ENCODE measurements at regions of chr12 and their contacts with region 1.

Region 1: DNA sequence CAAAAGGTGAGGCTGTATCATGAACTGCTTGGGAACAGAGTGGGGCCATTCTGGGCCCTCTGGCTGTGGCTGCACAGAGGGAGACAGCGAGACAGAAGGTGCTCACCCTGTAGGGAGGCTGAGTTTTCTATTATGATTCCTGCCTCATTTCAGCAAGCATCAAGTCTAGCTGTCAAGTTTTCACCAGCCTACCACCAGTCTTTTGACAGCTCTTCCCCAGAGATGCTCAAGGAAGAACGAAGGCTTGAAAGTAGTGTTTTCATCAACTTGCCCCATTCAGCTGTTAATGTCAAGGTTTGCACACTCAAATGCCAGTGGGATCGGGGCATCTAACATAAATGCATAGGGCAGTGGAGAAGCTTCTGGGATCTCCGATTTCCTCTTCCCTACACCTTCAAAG is 10.0 kb downstream of the FGF23 start:
- DNase-seq: no peak
- ATAC-seq: no peak
- H3K4me3 ChIP-seq: no peak overlapping the region
- H3K27ac ChIP-seq: no peak overlapping the region
- H3K4me1 ChIP-seq: no peaks in the 10 kb centered on the region
- H3K27me3 ChIP-seq: no peaks in the 10 kb centered on the region; the same call in 1 of the 2 replicates
- CTCF ChIP-seq: no peak
- POLR2A ChIP-seq: no peak
- RAD21 ChIP-seq: no peak

Region 2: GRCh38 chr12:4723226-4723625 is 353.7 kb after region 1 on chr12:
- CTCF ChIA-PET with region 1: no interaction called
- POLR2A ChIA-PET with region 1: interaction called, 10 read pairs
- dilution Hi-C with region 1: no loop called
- in situ Hi-C with region 1: no loop called
- intact Hi-C with region 1: no loop called
- DNase-seq: no peak
- ATAC-seq: no peak
- H3K4me3 ChIP-seq: no peak overlapping the region
- H3K27ac ChIP-seq: no peak overlapping the region
- H3K4me1 ChIP-seq: no peaks in the 10 kb centered on the region
- H3K27me3 ChIP-seq: peaks cover 10% of the 10 kb centered on the region
- CTCF ChIP-seq: no peak
- POLR2A ChIP-seq: no peak
- RAD21 ChIP-seq: no peak